Activated CD8-positive, alpha-beta memory T cell treated with anti-CD3 and anti-CD28 coated beads, Interleukin-2, amount 10 ng/mL, durations not matched to agents 7 days and 5 days (primary cell): ENCODE measurements at regions of chr7 and their contacts with region 1.

Region 1: GRCh38 chr7:51162724-51163329 is 153.8 kb downstream of the COBL start:
- DNase-seq: peak; percentile 84
- ATAC-seq: peak; percentile 94
- H3K4me3 Mint-ChIP-seq: no peak overlapping the region
- H3K27ac Mint-ChIP-seq: no peak overlapping the region
- H3K4me1 Mint-ChIP-seq: peaks cover 6% of the 10 kb centered on the region
- H3K27me3 Mint-ChIP-seq: peaks cover 37% of the 10 kb centered on the region

Region 2: DNA sequence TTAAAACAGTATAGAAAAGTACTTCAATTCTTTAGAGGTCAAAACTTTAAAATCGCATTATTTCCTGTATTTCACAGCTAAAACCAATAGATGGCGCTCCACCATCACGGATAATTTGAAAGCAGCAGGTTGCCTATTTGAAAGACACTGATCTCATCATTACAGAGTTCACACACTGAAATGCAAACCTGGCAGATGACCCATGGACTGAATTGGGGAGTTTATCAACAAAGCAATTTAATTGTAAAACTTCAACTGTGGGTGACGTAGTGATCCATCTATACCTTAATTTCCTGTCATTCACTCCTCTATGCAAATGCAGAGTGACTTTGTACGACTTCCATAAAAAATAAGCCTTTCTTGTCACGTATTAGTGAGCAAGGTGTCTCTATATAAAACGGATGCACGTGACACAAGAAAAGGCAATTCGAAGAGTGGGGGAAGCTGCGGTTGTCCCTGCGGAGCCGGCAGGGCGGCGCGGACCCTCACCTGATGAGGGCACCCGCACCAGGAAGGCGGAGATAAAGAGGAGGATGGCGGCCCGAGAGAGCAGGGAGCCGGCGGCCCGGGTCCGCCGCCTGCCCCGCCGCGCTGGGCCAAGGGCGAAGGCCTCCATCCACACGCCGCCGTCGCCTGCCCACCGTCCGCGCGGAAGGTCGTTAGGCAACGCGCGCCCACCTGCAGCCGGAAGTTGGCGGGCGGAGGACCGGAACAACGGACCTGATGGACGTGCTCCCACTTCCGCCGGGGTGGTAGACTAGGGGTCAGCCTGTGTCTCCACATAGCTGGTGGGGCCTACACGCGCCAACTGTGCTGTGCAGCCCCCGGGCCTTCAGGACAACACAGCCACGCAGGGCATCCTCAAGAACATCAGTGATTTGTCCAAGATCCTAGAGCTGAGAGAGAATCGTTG is 1070.0 kb before region 1 on chr7 and contains the start of gene ZPBP:
- CTCF ChIA-PET with region 1: interaction called, 10 read pairs
- DNase-seq: peak; percentile 59
- ATAC-seq: peak; percentile 75
- H3K4me3 Mint-ChIP-seq: peak within 1 kb of the TSS; percentile 76
- H3K27ac Mint-ChIP-seq: peak within 1 kb of the TSS; percentile 72
- H3K4me1 Mint-ChIP-seq: peaks cover 8% of the 10 kb centered on the region
- H3K27me3 Mint-ChIP-seq: peaks cover 24% of the 10 kb centered on the region
- total RNA-seq, gene ZPBP: not detected

Region 3: GRCh38 chr7:50614721-50615518 is 547.9 kb before region 1 on chr7:
- CTCF ChIA-PET with region 1: interaction called, 14 read pairs
- DNase-seq: peak; percentile 55
- ATAC-seq: peak; percentile 54
- H3K4me3 Mint-ChIP-seq: no peak overlapping the region
- H3K27ac Mint-ChIP-seq: no peak overlapping the region
- H3K4me1 Mint-ChIP-seq: peaks cover 35% of the 10 kb centered on the region
- H3K27me3 Mint-ChIP-seq: peaks cover 39% of the 10 kb centered on the region

Region 4: GRCh38 chr7:50696810-50697582 is 465.8 kb before region 1 on chr7:
- CTCF ChIA-PET with region 1: interaction called, 15 read pairs
- DNase-seq: no peak
- ATAC-seq: peak; percentile 36
- H3K4me3 Mint-ChIP-seq: no peak overlapping the region
- H3K27ac Mint-ChIP-seq: no peak overlapping the region
- H3K4me1 Mint-ChIP-seq: peaks cover 4% of the 10 kb centered on the region
- H3K27me3 Mint-ChIP-seq: peaks cover 36% of the 10 kb centered on the region

Region 5: DNA sequence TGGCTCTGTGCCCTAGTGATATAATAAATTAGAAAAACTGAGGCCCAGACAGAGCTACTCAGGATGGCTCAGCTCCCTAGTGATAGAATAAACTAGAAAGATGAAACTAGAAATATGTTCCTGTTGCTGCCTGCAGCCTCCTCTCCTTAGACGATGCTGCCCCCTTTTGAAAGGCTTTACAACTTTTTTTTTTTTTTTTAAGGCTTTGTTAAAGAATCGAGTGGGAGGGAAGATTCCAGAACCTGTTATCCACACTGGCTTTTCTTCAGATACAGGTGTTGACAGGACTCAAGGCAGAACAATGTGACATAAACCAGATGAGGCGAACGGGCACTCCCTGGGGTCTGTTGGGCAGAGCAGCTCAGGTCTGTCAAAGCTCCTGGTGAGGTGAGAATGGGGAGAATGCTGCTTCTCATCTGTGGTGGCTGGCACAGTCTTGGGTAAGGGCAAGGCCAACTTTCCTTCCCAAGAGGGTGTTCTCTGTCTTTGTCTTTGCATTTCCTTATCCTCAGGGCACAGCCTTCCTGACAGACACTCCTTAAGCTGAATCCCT is 21.3 kb before region 1 on chr7:
- CTCF ChIA-PET with region 1: interaction called, 23 read pairs
- DNase-seq: no peak
- ATAC-seq: no peak
- H3K4me3 Mint-ChIP-seq: no peak overlapping the region
- H3K27ac Mint-ChIP-seq: no peak overlapping the region
- H3K4me1 Mint-ChIP-seq: peaks cover 18% of the 10 kb centered on the region
- H3K27me3 Mint-ChIP-seq: peaks cover 13% of the 10 kb centered on the region

Region 6: GRCh38 chr7:51150193-51150592 is 12.6 kb before region 1 on chr7:
- CTCF ChIA-PET with region 1: interaction called, 10 read pairs
- DNase-seq: no peak
- ATAC-seq: no peak
- H3K4me3 Mint-ChIP-seq: no peak overlapping the region
- H3K27ac Mint-ChIP-seq: no peak overlapping the region
- H3K4me1 Mint-ChIP-seq: no peaks in the 10 kb centered on the region
- H3K27me3 Mint-ChIP-seq: peaks cover 8% of the 10 kb centered on the region

Region 7: DNA sequence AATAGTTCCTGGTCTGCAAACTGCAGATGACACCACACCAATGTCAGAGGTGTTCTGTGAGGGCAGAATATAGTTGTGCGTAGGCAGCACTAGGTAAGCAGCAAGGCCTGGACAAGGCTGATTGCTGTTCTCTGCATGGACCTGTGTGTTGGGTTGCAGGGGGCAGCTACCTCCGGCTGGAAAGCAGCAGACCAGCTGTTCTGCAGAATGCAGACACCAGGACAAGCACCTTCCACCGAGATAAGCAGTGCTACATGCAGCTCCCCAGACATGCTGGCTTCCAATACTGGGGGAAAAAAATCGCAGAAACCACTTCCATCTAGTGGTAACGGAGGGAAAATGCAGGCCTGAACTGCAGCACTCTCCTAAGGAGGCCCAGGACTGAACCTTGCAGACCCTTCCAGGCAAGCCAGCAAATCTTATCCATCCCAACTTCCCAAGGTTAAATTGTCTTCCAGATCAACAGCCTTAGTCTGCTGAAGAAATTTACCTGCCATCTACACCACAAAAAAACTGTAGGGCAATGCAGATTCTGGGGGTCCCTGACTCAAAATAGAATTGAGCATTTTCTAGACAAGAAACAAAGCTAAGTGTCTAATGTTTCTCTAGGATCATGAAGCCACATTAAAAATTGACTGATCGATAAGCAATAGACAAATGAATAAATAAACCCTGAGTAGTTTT is 204.2 kb after region 1 on chr7:
- CTCF ChIA-PET with region 1: interaction called, 21 read pairs
- DNase-seq: no peak
- ATAC-seq: peak; percentile 45
- H3K4me3 Mint-ChIP-seq: no peak overlapping the region
- H3K27ac Mint-ChIP-seq: no peak overlapping the region
- H3K4me1 Mint-ChIP-seq: no peaks in the 10 kb centered on the region
- H3K27me3 Mint-ChIP-seq: peaks cover under 1% of the 10 kb centered on the region